ENCODE measurements at regions of chr7 and their contacts with region 1.

Region 1: GRCh38 chr7:19224951-19225350 is 79.7 kb upstream of the FERD3L start:
- DNase-seq: no peak
- ATAC-seq: no peak

Region 2: GRCh38 chr7:19080093-19080492 is 144.9 kb before region 1 on chr7:
- intact Hi-C with region 1: no loop called
- DNase-seq: no peak
- ATAC-seq: no peak

Region 3: GRCh38 chr7:19284596-19285300 is 59.8 kb after region 1 on chr7:
- intact Hi-C with region 1: loop called in 1 of 2 experiments (anchors 10 kb)
- DNase-seq: no peak
- ATAC-seq: no peak

Measured in left cardiac atrium (tissue), 4 donors.